ENCODE measurements at regions of chr5 and their contacts with region 1.

Region 1: GRCh38 chr5:56552612-56553268 is 262.6 kb upstream of the MAP3K1 start:
- DNase-seq: peak; percentile 66
- H3K4me3 ChIP-seq: no peak overlapping the region
- H3K27ac ChIP-seq: no peak overlapping the region
- H3K4me1 ChIP-seq: peaks cover 13 to 44% (median 21%) of the 10 kb centered on the region in 4 donors
- H3K27me3 ChIP-seq: no peaks in the 10 kb centered on the region
- CTCF ChIP-seq: no peak
- EP300 ChIP-seq: no peak
- POLR2A ChIP-seq: no peak

Region 2: DNA sequence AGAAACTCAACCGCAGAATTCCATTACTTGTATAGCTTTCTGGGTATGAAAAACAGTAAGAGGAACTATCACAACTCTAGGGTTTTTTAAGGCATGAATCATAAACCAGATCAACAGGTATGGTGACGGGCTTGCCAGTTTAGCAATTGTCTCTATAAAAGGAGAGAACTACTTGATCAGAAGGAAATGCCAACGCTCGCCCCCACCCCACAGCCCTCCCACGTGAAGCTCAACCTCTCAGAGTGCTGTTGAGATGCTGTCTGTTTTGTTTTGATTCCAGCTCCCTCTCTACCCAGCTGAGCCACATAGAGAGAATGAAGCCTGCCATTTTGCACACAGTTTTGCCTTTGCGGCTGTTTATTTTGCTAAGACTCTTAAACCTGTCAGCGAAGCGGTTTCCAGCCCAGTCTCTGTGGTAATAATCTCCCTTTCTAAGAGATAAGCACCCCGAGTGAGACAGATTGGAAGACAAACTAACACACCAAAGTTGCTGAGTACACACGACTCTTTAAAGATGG is 61.7 kb before region 1 on chr5:
- intact Hi-C with region 1: loop called (anchors 5 kb)
- DNase-seq: no peak
- H3K4me3 ChIP-seq: no peak overlapping the region
- H3K27ac ChIP-seq: no peak overlapping the region
- H3K4me1 ChIP-seq: peaks cover 7 to 17% (median 12%) of the 10 kb centered on the region in 4 donors
- H3K27me3 ChIP-seq: no peaks in the 10 kb centered on the region
- CTCF ChIP-seq: no peak
- EP300 ChIP-seq: no peak
- POLR2A ChIP-seq: no peak

Region 3: GRCh38 chr5:56517011-56517416 is 35.7 kb before region 1 on chr5:
- intact Hi-C with region 1: no loop called
- DNase-seq: no peak
- H3K4me3 ChIP-seq: no peak overlapping the region
- H3K27ac ChIP-seq: no peak overlapping the region
- H3K4me1 ChIP-seq: peaks cover 20 to 48% (median 39%) of the 10 kb centered on the region in 4 donors
- H3K27me3 ChIP-seq: no peaks in the 10 kb centered on the region
- CTCF ChIP-seq: no peak
- EP300 ChIP-seq: no peak
- POLR2A ChIP-seq: no peak

Region 4: DNA sequence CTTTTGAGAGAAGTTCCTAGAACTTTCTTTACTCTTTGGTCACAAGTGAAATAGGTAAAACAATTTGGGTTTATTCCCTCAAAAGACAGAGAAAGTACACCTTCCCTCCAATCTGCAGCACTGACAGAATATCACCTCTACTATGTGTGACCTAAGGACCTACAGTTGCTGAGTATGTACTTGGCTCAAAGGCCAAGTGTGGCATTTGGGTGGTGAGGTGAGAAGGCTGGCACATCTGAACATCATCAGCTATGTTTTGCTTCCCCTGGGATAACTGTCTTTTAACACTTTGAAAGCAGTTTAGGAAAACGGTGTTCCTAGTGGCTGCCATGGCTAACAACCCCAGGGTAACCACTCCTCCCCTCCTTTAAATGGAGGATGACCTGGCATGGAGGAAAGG is 381.6 kb after region 1 on chr5:
- intact Hi-C with region 1: no loop called
- DNase-seq: no peak
- H3K4me3 ChIP-seq: no peak overlapping the region
- H3K27ac ChIP-seq: no peak overlapping the region
- H3K4me1 ChIP-seq: no peaks in the 10 kb centered on the region
- H3K27me3 ChIP-seq: no peaks in the 10 kb centered on the region
- CTCF ChIP-seq: no peak
- EP300 ChIP-seq: no peak
- POLR2A ChIP-seq: no peak

Measured in esophagus muscularis mucosa (tissue), 4 donors.